Mammary epithelial cell (primary cell): ENCODE measurements at regions of chr19 and their contacts with region 1.

Region 1: DNA sequence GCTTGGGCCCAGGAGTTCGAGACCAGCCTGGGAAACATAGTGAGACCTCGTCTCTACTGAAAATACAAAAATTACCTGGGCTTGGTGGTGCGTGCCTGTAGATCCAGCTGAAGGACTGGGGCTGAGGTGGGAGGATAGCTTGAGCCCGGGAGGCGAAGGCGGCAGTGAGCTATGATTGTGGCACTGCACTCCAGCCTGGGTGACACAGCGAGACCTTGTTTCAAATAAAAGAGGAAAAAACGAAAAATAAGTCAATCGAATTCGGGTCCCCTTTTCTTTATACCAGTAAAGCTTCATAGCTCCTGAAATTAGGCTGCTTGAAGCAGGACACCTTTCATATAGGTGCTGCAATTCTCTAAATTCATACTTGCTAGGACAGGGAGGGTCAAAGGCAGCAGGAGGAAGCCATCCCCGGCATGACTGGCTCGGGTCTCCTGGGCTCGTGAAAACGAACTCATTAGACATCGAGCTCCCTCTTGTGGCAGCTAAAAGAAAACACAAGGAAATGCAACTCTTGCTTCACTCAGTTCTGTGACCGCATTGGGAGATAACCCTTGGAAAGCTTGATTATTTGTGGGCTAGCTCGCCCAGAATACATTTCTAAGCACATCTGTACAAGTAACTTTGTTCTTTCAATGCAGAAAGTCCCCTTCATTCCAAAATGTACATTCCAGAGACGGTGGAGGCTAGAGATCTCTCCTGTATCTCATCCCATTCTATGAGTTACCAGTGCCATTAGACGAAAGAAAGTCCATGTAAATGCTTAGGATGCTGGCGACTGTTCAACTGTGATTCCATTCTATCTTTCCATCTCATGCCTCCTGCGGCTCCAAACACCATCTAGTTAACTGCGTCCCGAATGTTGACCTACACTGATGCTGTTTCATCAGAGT is 16.8 kb downstream of the FPR2 start:
- DNase-seq: peak; percentile 68
- H3K4me3 ChIP-seq: no peak overlapping the region
- H3K27ac ChIP-seq: no peak overlapping the region
- H3K4me1 ChIP-seq: no peaks in the 10 kb centered on the region
- H3K27me3 ChIP-seq: no peaks in the 10 kb centered on the region
- CTCF ChIP-seq: peak; percentile 62 to 72

Region 2: DNA sequence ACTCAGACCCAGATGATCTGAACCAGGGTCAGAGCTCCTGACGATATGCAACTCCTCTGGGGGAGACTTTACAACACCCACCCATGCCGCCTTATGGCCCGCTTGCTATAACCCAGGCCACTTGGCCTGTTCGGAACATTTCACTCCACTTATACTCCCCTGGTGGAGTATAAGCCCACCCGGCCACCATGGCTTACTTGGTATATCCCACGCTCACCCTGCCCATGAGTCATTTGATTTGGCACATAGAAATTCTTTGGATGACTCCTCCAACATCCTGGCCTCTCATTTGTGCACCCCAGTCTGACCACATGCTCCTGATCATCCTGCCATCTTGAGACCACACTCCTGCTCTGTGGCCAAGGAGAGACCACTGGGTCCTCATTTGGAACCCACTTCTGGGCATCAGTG is 79.6 kb before region 1 on chr19:
- CTCF ChIA-PET with region 1: no interaction called
- dilution Hi-C with region 1: loop called (anchors 5 kb)
- in situ Hi-C with region 1: no loop called
- intact Hi-C with region 1: no loop called
- DNase-seq: no peak
- H3K4me3 ChIP-seq: no peak overlapping the region
- H3K27ac ChIP-seq: no peak overlapping the region
- H3K4me1 ChIP-seq: peaks cover 19% of the 10 kb centered on the region
- H3K27me3 ChIP-seq: no peaks in the 10 kb centered on the region
- CTCF ChIP-seq: no peak

Region 3: DNA sequence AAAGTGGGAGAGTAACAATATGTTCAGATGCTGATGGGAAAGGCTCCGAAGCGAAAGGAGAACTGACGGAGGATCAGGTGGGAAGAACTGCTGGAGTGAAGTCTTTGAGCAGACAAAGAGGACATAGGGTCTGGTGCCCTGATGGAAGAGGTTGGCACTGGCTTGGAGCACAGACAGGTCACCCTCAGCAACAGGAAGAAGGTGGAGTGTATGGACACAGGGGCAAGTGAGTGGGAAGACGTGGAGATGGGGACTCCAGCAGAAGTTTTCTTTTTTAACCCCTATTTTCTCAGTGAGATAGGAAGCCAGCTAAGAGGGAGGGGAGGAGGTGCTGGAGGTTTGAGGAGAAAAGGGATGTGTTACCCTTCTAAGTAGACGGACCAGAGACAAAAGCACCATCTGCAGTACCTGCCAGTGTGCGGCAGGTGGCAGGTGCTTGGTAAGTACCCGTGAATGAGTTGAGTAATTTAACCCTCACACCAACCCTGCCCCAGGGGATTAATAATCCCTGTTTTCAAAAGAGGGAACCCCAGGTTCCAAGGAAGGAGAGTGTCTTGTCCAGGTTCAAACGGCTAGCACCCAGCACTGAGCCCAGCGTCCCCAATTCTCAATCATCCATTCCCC is 65.2 kb before region 1 on chr19:
- CTCF ChIA-PET with region 1: no interaction called
- dilution Hi-C with region 1: no loop called
- in situ Hi-C with region 1: loop called (anchors 5 kb)
- intact Hi-C with region 1: loop called (anchors 1 kb)
- DNase-seq: peak; percentile 69
- H3K4me3 ChIP-seq: no peak overlapping the region
- H3K27ac ChIP-seq: no peak overlapping the region
- H3K4me1 ChIP-seq: no peaks in the 10 kb centered on the region
- H3K27me3 ChIP-seq: peaks cover 2% of the 10 kb centered on the region
- CTCF ChIP-seq: peak; percentile 80 to 90

Region 4: DNA sequence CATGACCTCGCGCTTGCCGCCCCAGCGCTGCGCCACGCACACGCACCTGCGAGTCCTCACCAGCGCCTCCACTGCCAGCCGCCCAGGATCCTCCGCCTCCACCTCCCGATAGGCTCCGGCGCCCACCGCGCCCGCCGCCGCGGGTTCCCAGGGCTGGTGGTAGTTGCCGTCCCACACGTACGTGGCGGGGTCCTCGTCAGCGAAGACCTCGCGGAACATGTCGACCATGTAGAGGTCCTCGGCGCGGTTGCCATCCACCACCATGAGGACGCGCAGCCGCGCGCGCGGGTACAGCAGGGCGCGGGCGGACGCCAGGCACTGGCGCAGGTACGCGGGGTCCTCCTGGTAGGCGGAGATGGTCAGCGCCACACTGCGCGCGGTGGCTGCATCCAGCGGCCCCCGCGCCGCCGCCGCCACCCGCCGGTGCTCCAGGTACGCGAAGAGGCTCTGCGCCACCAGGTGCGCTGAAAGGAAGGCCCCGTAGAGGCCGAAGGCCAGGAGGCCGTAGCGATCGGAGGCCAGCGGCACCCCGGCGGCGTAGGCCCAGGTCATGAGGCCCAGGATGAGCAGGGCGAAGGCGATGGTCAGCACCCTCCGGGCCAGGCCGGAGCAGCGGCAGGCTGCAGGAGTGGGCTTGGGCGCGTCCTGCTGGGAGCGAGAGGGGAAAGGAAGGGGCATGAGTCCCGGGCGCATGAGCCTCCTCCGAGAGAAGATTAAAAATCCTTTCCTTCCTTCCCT is 58.4 kb before region 1 on chr19:
- CTCF ChIA-PET with region 1: no interaction called
- dilution Hi-C with region 1: no loop called
- in situ Hi-C with region 1: loop called (anchors 5 kb)
- intact Hi-C with region 1: no loop called
- DNase-seq: no peak
- H3K4me3 ChIP-seq: no peak overlapping the region
- H3K27ac ChIP-seq: no peak overlapping the region
- H3K4me1 ChIP-seq: peaks cover under 1% of the 10 kb centered on the region
- H3K27me3 ChIP-seq: peaks cover 11% of the 10 kb centered on the region
- CTCF ChIP-seq: no peak

Region 5: GRCh38 chr19:51861870-51862622 is 84.2 kb after region 1 on chr19:
- CTCF ChIA-PET with region 1: no interaction called
- dilution Hi-C with region 1: no loop called
- in situ Hi-C with region 1: no loop called
- intact Hi-C with region 1: no loop called
- DNase-seq: no peak
- H3K4me3 ChIP-seq: no peak overlapping the region
- H3K27ac ChIP-seq: no peak overlapping the region
- H3K4me1 ChIP-seq: no peaks in the 10 kb centered on the region
- H3K27me3 ChIP-seq: no peaks in the 10 kb centered on the region
- CTCF ChIP-seq: no peak

Region 6: GRCh38 chr19:51959791-51960190 is 182.0 kb after region 1 on chr19:
- CTCF ChIA-PET with region 1: no interaction called
- dilution Hi-C with region 1: no loop called
- in situ Hi-C with region 1: no loop called
- intact Hi-C with region 1: no loop called
- DNase-seq: no peak
- H3K4me3 ChIP-seq: no peak overlapping the region
- H3K27ac ChIP-seq: no peak overlapping the region
- H3K4me1 ChIP-seq: no peaks in the 10 kb centered on the region
- H3K27me3 ChIP-seq: no peaks in the 10 kb centered on the region
- CTCF ChIP-seq: no peak